ENCODE measurements at regions of chr1 and their contacts with region 1.

Region 1: GRCh38 chr1:45303582-45304310 is 22.9 kb upstream of the HPDL start:
- DNase-seq: peak; percentile 86 to 96 (median 93)
- ATAC-seq: peak; percentile 94
- H3K4me3 ChIP-seq: peak overlapping the region; percentile 95
- H3K4me3 Mint-ChIP-seq: peak overlapping the region; percentile 89 to 96 (median 92)
- H3K27ac ChIP-seq: peak overlapping the region; percentile 88
- H3K27ac Mint-ChIP-seq: peak overlapping the region; percentile 90 to 97 (median 95)
- H3K4me1 ChIP-seq: peaks cover 7 to 9% of the 10 kb centered on the region in 2 donors
- H3K4me1 Mint-ChIP-seq: peaks cover 6 to 32% (median 26%) of the 10 kb centered on the region in 7 donors
- H3K27me3 ChIP-seq: no peaks in the 10 kb centered on the region
- H3K27me3 Mint-ChIP-seq: no peaks in the 10 kb centered on the region

Region 2: DNA sequence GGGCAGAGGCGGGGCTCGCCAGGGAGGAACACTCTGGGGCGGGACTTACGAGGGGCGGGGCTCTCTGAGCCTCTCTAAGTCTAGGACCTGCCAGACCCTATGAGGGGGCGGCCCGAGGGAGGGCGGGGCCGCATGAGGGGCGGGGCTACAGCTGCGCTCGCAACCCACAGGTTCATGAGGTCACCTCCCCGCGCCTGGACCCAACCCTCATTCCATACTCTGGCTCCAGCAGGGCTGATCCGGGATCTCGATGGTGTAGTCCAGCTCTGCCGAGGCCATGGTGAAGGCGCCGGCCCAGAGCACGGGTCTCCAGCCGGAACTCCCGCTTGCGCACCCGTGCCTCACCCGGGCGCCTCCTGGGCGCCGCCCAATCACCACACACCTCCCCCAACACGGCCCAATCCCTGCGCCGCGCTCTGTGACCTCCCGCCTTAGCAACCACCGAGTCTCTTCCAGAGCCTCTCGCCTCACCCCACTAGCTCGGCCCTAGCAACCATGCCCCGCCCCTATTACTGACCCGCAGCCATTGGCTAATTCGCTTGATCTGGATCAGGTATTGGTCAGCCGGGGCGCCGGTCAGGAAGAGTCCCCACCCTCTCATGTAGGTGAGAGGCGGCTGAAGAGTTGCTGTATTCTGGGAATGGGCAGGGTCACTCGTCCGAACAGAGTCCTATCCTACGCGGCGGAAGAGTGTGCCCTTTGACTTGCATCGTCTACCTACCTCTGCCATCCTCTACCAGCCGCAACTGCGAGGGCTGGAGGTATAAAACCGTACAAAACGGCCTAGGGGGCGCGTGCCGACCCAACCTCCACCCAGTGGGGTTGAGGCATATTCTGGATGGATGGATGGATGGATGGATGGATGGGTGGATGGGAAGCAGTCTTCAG is 629.4 kb before region 1 on chr1 and contains the starts of genes ARMH1 and TMEM53:
- CTCF ChIA-PET with region 1: no interaction called
- POLR2A ChIA-PET with region 1: interaction called, 6 read pairs
- intact Hi-C with region 1: loop called (anchors 1 to 2 kb)
- DNase-seq: peak; percentile 91 to 96 (median 95)
- ATAC-seq: peak; percentile 94
- H3K4me3 ChIP-seq: peak within 1 kb of the TSS; percentile 81
- H3K4me3 Mint-ChIP-seq: peak within 1 kb of the TSS; percentile 83 to 94 (median 91)
- H3K27ac ChIP-seq: peak within 1 kb of the TSS; percentile 76
- H3K27ac Mint-ChIP-seq: peak within 1 kb of the TSS; percentile 84 to 94 (median 91)
- H3K4me1 ChIP-seq: peaks cover 0 to 6% of the 10 kb centered on the region in 2 donors
- H3K4me1 Mint-ChIP-seq: peaks cover 13 to 34% (median 23%) of the 10 kb centered on the region in 7 donors
- H3K27me3 ChIP-seq: no peaks in the 10 kb centered on the region
- H3K27me3 Mint-ChIP-seq: no peaks in the 10 kb centered on the region
- total RNA-seq, gene ARMH1: 65.8 to 205 (median 87.0) TPM
- total RNA-seq, gene TMEM53: 1.6 to 3.5 (median 1.9) TPM

Region 3: DNA sequence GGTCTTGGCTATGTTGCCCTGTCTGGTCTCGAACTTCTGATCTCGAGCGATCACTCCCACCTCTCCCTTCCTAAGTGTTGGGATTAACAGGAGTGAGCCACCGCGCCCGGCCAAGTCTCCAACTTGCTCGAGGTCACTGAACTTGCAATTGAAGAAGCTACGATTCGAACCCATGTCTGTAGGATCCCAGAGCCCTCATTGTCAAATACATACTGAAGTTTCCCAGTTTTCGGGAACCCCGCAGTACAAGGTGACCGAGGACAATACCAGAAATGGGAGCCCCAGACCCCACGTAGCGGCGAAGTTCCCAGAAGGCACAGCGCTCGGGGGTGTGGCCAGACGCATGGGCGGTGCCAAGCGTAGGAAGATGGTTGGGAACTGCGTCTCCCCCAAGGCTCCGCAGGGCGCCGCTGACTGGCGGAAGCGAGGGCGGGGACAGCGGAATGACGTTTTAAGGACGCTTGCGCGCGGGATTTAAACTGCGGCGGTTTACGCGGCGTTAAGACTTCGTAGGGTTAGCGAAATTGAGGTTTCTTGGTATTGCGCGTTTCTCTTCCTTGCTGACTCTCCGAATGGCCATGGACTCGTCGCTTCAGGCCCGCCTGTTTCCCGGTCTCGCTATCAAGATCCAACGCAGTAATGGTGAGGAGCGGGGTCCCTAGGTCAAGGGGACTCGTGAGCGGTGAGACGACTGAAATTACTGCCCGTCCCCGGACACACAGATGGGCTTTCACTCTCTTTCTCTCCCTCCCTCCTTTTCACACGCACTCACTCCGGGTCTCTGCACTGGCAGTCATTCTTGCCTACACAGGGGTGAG is 564.2 kb before region 1 on chr1 and contains the start of gene KIF2C:
- CTCF ChIA-PET with region 1: interaction called, 3 read pairs
- POLR2A ChIA-PET with region 1: no interaction called
- intact Hi-C with region 1: loop called (anchors 1 to 2 kb)
- DNase-seq: peak; percentile 87 to 96 (median 94)
- ATAC-seq: peak; percentile 100
- H3K4me3 ChIP-seq: peak within 1 kb of the TSS; percentile 79
- H3K4me3 Mint-ChIP-seq: peak within 1 kb of the TSS; percentile 84 to 99 (median 94)
- H3K27ac ChIP-seq: peak within 1 kb of the TSS; percentile 84
- H3K27ac Mint-ChIP-seq: peak within 1 kb of the TSS; percentile 86 to 97 (median 95)
- H3K4me1 ChIP-seq: peaks cover 5 to 7% of the 10 kb centered on the region in 2 donors
- H3K4me1 Mint-ChIP-seq: peaks cover 9 to 39% (median 19%) of the 10 kb centered on the region in 7 donors
- H3K27me3 ChIP-seq: no peaks in the 10 kb centered on the region
- H3K27me3 Mint-ChIP-seq: no peaks in the 10 kb centered on the region
- total RNA-seq, gene KIF2C: 0.32 to 69.3 (median 1.1) TPM

Region 4: GRCh38 chr1:44835738-44836675 is 467.7 kb before region 1 on chr1:
- CTCF ChIA-PET with region 1: no interaction called
- POLR2A ChIA-PET with region 1: no interaction called
- intact Hi-C with region 1: loop called (anchors 1 kb)
- DNase-seq: peak; percentile 58 to 82 (median 75)
- ATAC-seq: peak; percentile 96
- H3K4me3 ChIP-seq: no peak overlapping the region
- H3K4me3 Mint-ChIP-seq: peak overlapping the region in 9 of 10 donors; percentile 3 to 73 (median 42)
- H3K27ac ChIP-seq: no peak overlapping the region
- H3K27ac Mint-ChIP-seq: peak overlapping the region in 8 of 9 donors; percentile 12 to 81 (median 41)
- H3K4me1 ChIP-seq: no peaks in the 10 kb centered on the region
- H3K4me1 Mint-ChIP-seq: peaks cover 7 to 19% (median 8%) of the 10 kb centered on the region in 7 donors
- H3K27me3 ChIP-seq: no peaks in the 10 kb centered on the region
- H3K27me3 Mint-ChIP-seq: peaks cover under 1 to 9% (median under 1%) of the 10 kb centered on the region in 5 donors

Region 5: GRCh38 chr1:45326627-45327623 is 23.2 kb after region 1 on chr1 and contains the start of gene HPDL:
- CTCF ChIA-PET with region 1: no interaction called
- POLR2A ChIA-PET with region 1: interaction called, 6 read pairs
- intact Hi-C with region 1: loop called (anchors 1 to 2 kb)
- DNase-seq: peak in 6 of 9 donors; percentile 18 to 62 (median 34)
- ATAC-seq: peak; percentile 83
- H3K4me3 ChIP-seq: peak within 1 kb of the TSS; percentile 63
- H3K4me3 Mint-ChIP-seq: peak within 1 kb of the TSS; percentile 78 to 87 (median 83)
- H3K27ac ChIP-seq: peak within 1 kb of the TSS; percentile 29
- H3K27ac Mint-ChIP-seq: peak within 1 kb of the TSS in 6 of 9 donors; percentile 32 to 73 (median 59)
- H3K4me1 ChIP-seq: peaks cover 4 to 5% of the 10 kb centered on the region in 2 donors
- H3K4me1 Mint-ChIP-seq: peaks cover 0 to 14% (median 5%) of the 10 kb centered on the region in 7 donors
- H3K27me3 ChIP-seq: no peaks in the 10 kb centered on the region
- H3K27me3 Mint-ChIP-seq: no peaks in the 10 kb centered on the region
- total RNA-seq, gene HPDL: 0.32 to 6.7 (median 0.68) TPM

Region 6: GRCh38 chr1:45550401-45551351 is 246.9 kb after region 1 on chr1 and contains the start of gene AKR1A1:
- CTCF ChIA-PET with region 1: no interaction called
- POLR2A ChIA-PET with region 1: interaction called, 6 read pairs
- intact Hi-C with region 1: loop called in 1 of 2 experiments (anchors 1 kb)
- DNase-seq: peak; percentile 79 to 91 (median 88)
- ATAC-seq: peak; percentile 98
- H3K4me3 ChIP-seq: peak within 1 kb of the TSS; percentile 93
- H3K4me3 Mint-ChIP-seq: peak within 1 kb of the TSS; percentile 89 to 99 (median 96)
- H3K27ac ChIP-seq: peak within 1 kb of the TSS; percentile 89
- H3K27ac Mint-ChIP-seq: peak within 1 kb of the TSS; percentile 83 to 98 (median 96)
- H3K4me1 ChIP-seq: peaks cover 12 to 22% of the 10 kb centered on the region in 2 donors
- H3K4me1 Mint-ChIP-seq: peaks cover 18 to 28% (median 22%) of the 10 kb centered on the region in 7 donors
- H3K27me3 ChIP-seq: no peaks in the 10 kb centered on the region
- H3K27me3 Mint-ChIP-seq: no peaks in the 10 kb centered on the region
- total RNA-seq, gene AKR1A1: 47.5 to 155 (median 69.3) TPM

Region 7: DNA sequence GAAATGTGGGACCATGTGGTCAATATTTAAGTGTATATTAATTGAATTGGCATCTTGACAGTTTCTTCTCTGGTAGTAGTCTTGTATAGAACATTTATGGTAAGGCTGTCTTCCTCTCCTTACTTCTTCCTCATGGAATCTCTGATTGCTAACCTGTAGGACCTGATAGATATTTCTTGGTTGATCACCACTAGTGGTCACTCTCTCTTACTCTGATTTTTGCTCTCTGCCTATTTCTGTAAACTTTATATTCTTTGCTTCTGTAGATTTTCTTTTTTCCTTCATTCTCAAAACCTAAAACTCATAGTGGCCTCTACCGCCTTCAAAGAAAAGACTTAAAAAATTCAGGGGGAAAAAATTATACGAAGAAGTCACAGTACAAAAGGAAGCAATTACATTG is 520.9 kb after region 1 on chr1:
- CTCF ChIA-PET with region 1: no interaction called
- POLR2A ChIA-PET with region 1: no interaction called
- intact Hi-C with region 1: no loop called
- DNase-seq: no peak
- ATAC-seq: no peak
- H3K4me3 ChIP-seq: no peak overlapping the region
- H3K4me3 Mint-ChIP-seq: no peak overlapping the region
- H3K27ac ChIP-seq: no peak overlapping the region
- H3K27ac Mint-ChIP-seq: no peak overlapping the region
- H3K4me1 ChIP-seq: no peaks in the 10 kb centered on the region
- H3K4me1 Mint-ChIP-seq: peaks cover 5 to 14% (median 10%) of the 10 kb centered on the region in 7 donors
- H3K27me3 ChIP-seq: no peaks in the 10 kb centered on the region
- H3K27me3 Mint-ChIP-seq: no peaks in the 10 kb centered on the region

Measured in naive thymus-derived CD4-positive, alpha-beta T cell (primary cell).